ENCODE measurements at regions of chr11 and their contacts with region 1.

Region 1: DNA sequence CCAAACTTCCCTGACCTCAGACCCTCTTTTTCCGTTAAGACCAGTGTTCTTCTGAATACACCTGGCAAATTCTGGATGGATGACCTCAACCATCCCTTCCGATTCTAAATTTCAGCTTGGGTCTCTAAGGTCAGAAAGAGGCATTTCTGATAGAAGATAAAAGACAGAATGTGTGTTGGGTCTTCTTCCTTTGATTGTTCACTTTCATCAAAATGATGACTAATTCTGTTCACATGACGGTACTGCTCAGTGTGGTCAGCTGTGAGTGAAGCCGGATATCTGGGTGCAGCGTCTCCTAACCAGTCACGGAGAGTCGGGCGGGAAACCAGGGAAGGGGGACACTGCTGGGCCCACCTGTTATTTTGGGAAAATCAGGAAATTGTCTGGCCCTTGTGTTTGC is 151.6 kb upstream of the NAV2 start:
- DNase-seq: no peak
- ATAC-seq: no peak
- H3K4me3 ChIP-seq: no peak overlapping the region
- H3K27ac ChIP-seq: no peak overlapping the region
- H3K4me1 ChIP-seq: peaks cover 0 to 13% (median 7%) of the 10 kb centered on the region in 12 donors
- H3K27me3 ChIP-seq: peaks cover 0 to 12% (median 0%) of the 10 kb centered on the region in 9 donors
- CTCF ChIP-seq: no peak
- POLR2A ChIP-seq: no peak

Region 2: GRCh38 chr11:19679952-19680828 is 119.2 kb after region 1 on chr11:
- intact Hi-C with region 1: no loop called
- DNase-seq: peak; percentile 83 to 94 (median 86)
- ATAC-seq: peak; percentile 32 to 85 (median 78)
- H3K4me3 ChIP-seq: no peak overlapping the region
- H3K27ac ChIP-seq: peak overlapping the region; percentile 43 to 88 (median 78)
- H3K4me1 ChIP-seq: peaks cover 2 to 87% (median 47%) of the 10 kb centered on the region in 12 donors
- H3K27me3 ChIP-seq: no peaks in the 10 kb centered on the region
- CTCF ChIP-seq: peak in 1 of 12 donors; percentile 19
- POLR2A ChIP-seq: no peak

Region 3: DNA sequence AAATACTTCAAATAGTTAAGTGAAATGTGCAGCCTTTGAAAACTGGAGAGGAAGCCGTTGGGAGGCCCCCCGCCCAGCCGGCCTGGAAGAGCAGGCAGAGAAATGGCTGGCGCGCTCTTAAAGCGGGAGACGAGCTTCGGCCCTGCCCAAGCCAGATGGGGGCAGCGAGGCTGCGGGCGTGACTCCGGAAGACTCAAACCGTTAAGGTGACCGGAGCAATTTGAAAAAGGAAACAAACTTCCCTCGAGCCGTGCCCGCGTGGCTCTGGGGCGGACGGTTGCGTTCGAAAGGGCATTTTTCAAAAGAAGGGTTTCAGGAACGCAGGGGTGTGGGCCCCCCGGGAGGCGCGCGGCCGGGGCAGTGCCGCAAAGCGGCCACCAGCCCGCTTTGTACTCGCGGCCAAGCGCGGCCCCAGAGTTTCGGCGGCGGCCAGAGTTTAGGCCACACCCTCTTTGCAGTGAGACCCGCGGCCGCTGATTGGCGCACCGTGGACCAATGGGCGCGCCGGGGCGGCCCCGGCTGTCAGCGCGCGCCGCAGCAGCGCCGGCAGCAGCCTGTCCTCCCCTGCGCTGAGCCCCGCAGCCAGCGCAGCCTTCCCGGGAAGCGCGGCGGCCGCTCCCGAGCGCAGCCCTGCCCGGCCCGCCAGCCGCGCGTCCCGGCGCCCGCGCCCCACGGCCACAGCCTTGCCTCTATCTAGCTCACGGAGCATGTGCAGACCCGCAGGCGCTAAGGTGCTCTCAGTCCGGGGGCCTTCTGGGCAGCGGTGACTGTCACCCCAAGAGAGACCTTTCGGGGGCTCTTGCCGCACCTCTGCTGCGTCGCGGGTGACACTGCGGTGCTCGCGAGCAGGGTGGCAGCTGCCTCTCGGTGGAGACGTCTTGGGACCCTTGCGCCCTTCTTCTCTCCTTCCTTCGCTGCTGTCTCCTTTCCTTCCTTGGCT is 151.5 kb after region 1 on chr11 and contains the start of gene NAV2:
- intact Hi-C with region 1: loop called in 1 of 10 experiments (anchors 1 kb)
- DNase-seq: peak; percentile 94 to 96 (median 95)
- ATAC-seq: peak; percentile 84 to 96 (median 92)
- H3K4me3 ChIP-seq: peak within 1 kb of the TSS; percentile 52 to 89 (median 72)
- H3K27ac ChIP-seq: peak within 1 kb of the TSS; percentile 75 to 98 (median 94)
- H3K4me1 ChIP-seq: peaks cover 0 to 50% (median 36%) of the 10 kb centered on the region in 12 donors
- H3K27me3 ChIP-seq: peaks cover 0 to 30% (median 0%) of the 10 kb centered on the region in 9 donors
- CTCF ChIP-seq: peak in 4 of 12 donors; percentile 2 to 12 (median 10)
- POLR2A ChIP-seq: peak; percentile 77 to 99
- total RNA-seq, gene NAV2: 12.3 to 46.5 (median 25.4) TPM

Region 4: GRCh38 chr11:19800162-19800561 is 239.2 kb after region 1 on chr11:
- intact Hi-C with region 1: loop called in 7 of 10 experiments (anchors 5 to 10 kb)
- DNase-seq: peak in 1 of 5 donors; percentile 25
- ATAC-seq: peak in 2 of 4 donors; percentile 46 to 52
- H3K4me3 ChIP-seq: no peak overlapping the region
- H3K27ac ChIP-seq: no peak overlapping the region
- H3K4me1 ChIP-seq: peaks cover 0 to 64% (median 27%) of the 10 kb centered on the region in 12 donors
- H3K27me3 ChIP-seq: no peaks in the 10 kb centered on the region
- CTCF ChIP-seq: peak in 9 of 12 donors; percentile 18 to 51 (median 31)
- POLR2A ChIP-seq: no peak

Region 5: DNA sequence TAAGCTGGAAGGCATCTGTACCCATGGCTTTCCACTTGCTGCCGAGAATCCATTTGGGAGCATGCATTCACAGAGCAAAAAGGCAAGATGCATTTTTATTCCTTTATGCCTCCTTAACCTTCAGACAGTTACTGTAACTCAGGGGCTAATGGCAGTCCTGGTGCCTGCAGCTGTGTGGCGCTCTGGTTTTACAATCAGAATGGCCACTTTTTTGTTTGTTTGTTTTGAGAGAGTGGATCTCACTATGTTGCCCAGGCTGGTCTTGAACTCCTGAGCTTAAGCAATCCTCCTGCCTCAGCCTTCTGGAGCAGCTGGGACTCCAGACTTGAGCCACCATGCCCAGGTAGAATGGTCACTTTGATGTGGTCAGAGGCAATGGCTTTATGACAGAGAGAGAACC is 253.4 kb after region 1 on chr11:
- intact Hi-C with region 1: loop called in 9 of 10 experiments (anchors 2 to 10 kb)
- DNase-seq: no peak
- ATAC-seq: no peak
- H3K4me3 ChIP-seq: no peak overlapping the region
- H3K27ac ChIP-seq: peak overlapping the region in 1 of 12 donors; percentile 75
- H3K4me1 ChIP-seq: peaks cover 0 to 76% (median 40%) of the 10 kb centered on the region in 12 donors
- H3K27me3 ChIP-seq: no peaks in the 10 kb centered on the region
- CTCF ChIP-seq: no peak
- POLR2A ChIP-seq: no peak

Region 6: GRCh38 chr11:20127671-20128527 is 566.9 kb after region 1 on chr11:
- intact Hi-C with region 1: loop called in 2 of 10 experiments (anchors 5 to 10 kb)
- DNase-seq: peak; percentile 71 to 82 (median 76)
- ATAC-seq: peak; percentile 63 to 86 (median 80)
- H3K4me3 ChIP-seq: no peak overlapping the region
- H3K27ac ChIP-seq: no peak overlapping the region
- H3K4me1 ChIP-seq: peaks cover 0 to 11% (median 4%) of the 10 kb centered on the region in 12 donors
- H3K27me3 ChIP-seq: peaks cover 0 to 13% (median 0%) of the 10 kb centered on the region in 9 donors
- CTCF ChIP-seq: peak; percentile 78 to 87 (median 83)
- POLR2A ChIP-seq: no peak